Activated CD8-positive, alpha-beta memory T cell treated with anti-CD3 and anti-CD28 coated beads, Interleukin-2, amount 10 ng/mL, durations not matched to agents 7 days and 5 days (primary cell): ENCODE measurements at regions of chr2 and their contacts with region 1.

Region 1: DNA sequence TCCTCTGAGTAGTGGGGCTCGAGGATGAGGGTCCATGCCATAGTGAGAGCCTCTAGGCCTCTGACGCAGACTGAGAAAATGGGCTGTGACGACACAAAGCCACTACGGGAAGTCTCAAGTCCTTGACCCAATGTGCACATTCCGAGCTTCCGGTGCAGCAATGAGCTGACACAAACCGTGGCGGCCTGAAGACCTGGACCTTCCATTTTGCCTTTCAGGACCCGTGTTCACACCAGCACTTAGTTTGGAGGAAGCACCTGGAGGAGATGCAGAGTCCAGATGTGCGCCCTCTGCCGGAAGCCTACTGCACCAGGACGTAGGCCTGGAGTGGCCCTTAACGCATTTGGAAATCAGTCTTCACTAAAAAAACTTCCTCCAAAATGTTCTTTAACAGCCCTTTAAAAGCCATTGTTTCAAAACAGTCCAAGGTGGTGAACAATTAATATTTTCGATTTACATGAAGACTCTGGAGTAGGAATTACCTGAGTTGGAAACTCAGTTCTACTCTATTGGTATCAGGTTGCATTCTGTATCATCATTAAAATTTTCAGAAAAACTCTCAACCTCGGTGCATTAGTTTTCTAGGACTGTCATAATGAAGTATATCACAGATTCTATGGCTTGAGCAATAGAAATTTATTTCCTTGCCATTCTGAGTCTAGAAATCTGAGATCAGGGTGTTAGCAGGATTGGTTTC is 33.9 kb downstream of the BMP10 start:
- DNase-seq: peak; percentile 77
- ATAC-seq: peak; percentile 64
- H3K4me3 Mint-ChIP-seq: no peak overlapping the region
- H3K27ac Mint-ChIP-seq: peak overlapping the region; percentile 83
- H3K4me1 Mint-ChIP-seq: peaks cover 36% of the 10 kb centered on the region
- H3K27me3 Mint-ChIP-seq: no peaks in the 10 kb centered on the region

Region 2: GRCh38 chr2:68643011-68643873 is 194.1 kb before region 1 on chr2 and contains the start of gene PROKR1:
- CTCF ChIA-PET with region 1: no interaction called
- DNase-seq: no peak
- ATAC-seq: peak; percentile 63
- H3K4me3 Mint-ChIP-seq: peak within 1 kb of the TSS; percentile 18
- H3K27ac Mint-ChIP-seq: no peak within 1 kb of the TSS
- H3K4me1 Mint-ChIP-seq: peaks cover 13% of the 10 kb centered on the region
- H3K27me3 Mint-ChIP-seq: peaks cover 86% of the 10 kb centered on the region
- total RNA-seq, gene PROKR1: not detected

Region 3: DNA sequence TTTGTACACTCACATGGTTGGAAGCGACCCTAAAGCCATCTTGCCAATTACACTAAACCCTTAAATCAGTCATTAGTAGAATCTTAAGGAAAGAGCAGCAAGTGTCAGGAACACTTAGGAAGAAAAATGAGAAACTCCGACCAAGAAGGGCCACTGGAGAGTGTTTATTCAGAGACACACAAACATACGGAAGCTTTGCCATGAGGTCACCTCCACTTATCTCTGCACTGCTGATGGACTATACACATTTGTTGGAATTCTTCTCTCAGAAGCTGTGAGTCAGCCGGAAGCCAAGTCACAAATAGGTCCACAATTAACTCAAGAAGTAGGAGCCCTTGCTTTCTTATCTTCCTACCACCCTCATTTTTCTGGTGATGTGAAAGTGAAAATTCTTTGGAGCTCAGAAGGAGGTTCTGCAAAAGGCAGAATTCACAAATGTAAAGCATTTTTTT is 12.3 kb after region 1 on chr2:
- CTCF ChIA-PET with region 1: interaction called, 10 read pairs
- DNase-seq: no peak
- ATAC-seq: no peak
- H3K4me3 Mint-ChIP-seq: no peak overlapping the region
- H3K27ac Mint-ChIP-seq: no peak overlapping the region
- H3K4me1 Mint-ChIP-seq: no peaks in the 10 kb centered on the region
- H3K27me3 Mint-ChIP-seq: peaks cover 35% of the 10 kb centered on the region

Region 4: GRCh38 chr2:68909793-68910674 is 72.7 kb after region 1 on chr2:
- CTCF ChIA-PET with region 1: interaction called, 56 read pairs
- DNase-seq: peak; percentile 89
- ATAC-seq: no peak
- H3K4me3 Mint-ChIP-seq: no peak overlapping the region
- H3K27ac Mint-ChIP-seq: peak overlapping the region; percentile 77
- H3K4me1 Mint-ChIP-seq: peaks cover 40% of the 10 kb centered on the region
- H3K27me3 Mint-ChIP-seq: no peaks in the 10 kb centered on the region

Region 5: GRCh38 chr2:69067026-69067630 is 229.8 kb after region 1 on chr2:
- CTCF ChIA-PET with region 1: no interaction called
- DNase-seq: no peak
- ATAC-seq: no peak
- H3K4me3 Mint-ChIP-seq: no peak overlapping the region
- H3K27ac Mint-ChIP-seq: no peak overlapping the region
- H3K4me1 Mint-ChIP-seq: no peaks in the 10 kb centered on the region
- H3K27me3 Mint-ChIP-seq: peaks cover 68% of the 10 kb centered on the region